ENCODE measurements at regions of chr3 and their contacts with region 1.

Region 1: DNA sequence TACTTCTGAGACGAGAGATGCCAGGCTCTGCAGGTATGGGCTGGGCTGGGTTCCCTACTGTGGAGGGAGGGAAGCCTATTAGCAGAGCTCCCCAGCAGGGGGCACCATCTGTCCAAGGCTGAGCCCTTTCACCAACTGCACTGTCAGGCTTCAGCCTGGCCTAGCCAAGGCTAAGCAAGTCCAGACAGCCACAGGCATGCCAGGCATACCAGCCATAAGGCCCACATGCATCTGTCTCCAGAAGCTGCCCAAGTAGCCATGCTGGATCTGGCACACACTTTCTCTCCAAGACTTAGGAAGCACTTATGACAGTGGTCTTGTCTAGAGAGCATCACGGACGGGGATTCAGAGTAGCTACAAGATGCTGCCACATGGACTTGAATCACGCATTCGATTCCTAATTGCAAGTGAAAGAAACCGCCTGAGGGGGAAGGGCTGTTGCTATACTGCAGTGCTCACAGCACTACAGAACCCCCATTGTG is 28.3 kb downstream of the RUVBL1 start:
- DNase-seq: peak; percentile 86
- ATAC-seq: peak; percentile 99
- H3K4me3 Mint-ChIP-seq: no peak overlapping the region
- H3K27ac Mint-ChIP-seq: peak overlapping the region; percentile 5
- H3K4me1 Mint-ChIP-seq: peaks cover 11% of the 10 kb centered on the region
- H3K27me3 Mint-ChIP-seq: no peaks in the 10 kb centered on the region
- CTCF ChIP-seq: peak; percentile 70

Region 2: GRCh38 chr3:128080320-128081080 is 14.8 kb before region 1 on chr3:
- CTCF ChIA-PET with region 1: interaction called, 17 read pairs
- POLR2A ChIA-PET with region 1: interaction called, 3 read pairs
- intact Hi-C with region 1: no loop called
- DNase-seq: no peak
- ATAC-seq: no peak
- H3K4me3 Mint-ChIP-seq: no peak overlapping the region
- H3K27ac Mint-ChIP-seq: no peak overlapping the region
- H3K4me1 Mint-ChIP-seq: peaks cover 10% of the 10 kb centered on the region
- H3K27me3 Mint-ChIP-seq: no peaks in the 10 kb centered on the region
- CTCF ChIP-seq: no peak

Region 3: DNA sequence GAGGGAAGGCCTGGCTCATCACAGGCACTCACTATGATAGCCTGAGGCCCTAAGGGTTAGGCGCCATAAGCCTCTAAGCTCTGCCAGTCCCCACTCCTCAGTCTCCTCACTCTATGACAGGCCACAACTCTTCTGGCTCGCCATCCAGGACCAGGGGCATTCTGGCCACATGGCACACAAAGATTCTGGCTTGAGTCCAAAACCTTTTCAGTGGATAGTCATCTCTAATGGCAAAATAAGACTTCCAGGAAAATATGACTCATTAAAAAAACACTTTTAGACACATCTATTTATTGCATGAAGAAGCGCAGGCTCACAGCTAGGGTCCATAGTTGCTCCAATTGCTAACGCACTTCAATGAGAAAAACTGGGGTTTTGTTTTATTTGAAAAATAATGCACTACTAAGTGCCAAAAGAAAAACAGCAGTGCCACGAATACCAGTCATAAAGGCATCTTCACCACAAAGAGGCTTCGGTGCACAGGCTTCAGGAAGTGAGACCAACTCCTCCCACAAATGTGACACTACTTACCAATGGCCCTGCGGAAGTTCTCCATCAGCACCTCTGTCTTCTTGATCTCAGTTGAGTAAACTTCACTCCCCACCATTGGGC is 17.2 kb after region 1 on chr3:
- CTCF ChIA-PET with region 1: interaction called, 21 read pairs
- POLR2A ChIA-PET with region 1: no interaction called
- intact Hi-C with region 1: no loop called
- DNase-seq: peak; percentile 70
- ATAC-seq: peak; percentile 97
- H3K4me3 Mint-ChIP-seq: peak overlapping the region; percentile 18
- H3K27ac Mint-ChIP-seq: peak overlapping the region; percentile 97
- H3K4me1 Mint-ChIP-seq: peaks cover 44% of the 10 kb centered on the region
- H3K27me3 Mint-ChIP-seq: no peaks in the 10 kb centered on the region
- CTCF ChIP-seq: no peak

Region 4: DNA sequence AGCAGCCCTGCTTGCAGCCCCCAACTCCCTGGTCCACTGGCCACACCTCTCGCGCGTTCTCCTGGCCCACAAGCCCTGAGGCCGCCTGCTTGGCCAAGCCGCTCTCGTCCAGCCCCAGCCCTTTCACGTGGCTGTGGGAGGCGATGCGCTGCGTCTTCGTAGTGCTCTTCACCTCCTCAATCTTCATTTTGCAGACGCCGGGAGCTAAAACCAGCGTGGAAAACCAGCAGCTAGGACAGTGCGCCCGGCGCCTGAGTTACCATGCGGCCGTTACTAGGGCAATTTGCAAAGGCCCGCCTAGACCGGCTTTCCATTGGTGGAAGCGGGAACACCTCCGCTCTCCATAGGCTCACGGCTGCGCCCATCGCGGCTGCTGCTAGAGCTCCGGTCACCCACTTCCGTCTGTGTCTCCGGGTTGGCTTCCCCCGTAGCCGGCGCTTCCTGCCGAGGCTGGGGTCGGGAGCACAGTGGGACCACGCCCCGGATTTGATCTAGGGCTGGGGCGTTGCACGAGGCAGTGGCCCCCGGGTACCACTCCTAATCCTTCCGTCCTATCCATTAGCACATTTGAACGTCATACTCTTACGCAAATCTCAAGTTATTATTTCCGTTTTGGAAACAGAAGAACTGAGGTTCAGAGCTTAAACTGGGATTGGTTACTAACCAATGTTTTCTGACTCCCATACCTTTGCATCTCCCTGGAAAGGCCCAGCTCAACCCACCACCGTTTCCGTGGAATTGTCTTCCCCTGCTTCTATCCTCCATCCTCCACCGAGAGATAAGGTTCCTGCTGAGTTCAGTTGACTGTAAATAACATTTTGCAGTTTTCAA is 28.5 kb after region 1 on chr3 and contains the start of gene RUVBL1:
- CTCF ChIA-PET with region 1: interaction called, 23 read pairs
- POLR2A ChIA-PET with region 1: no interaction called
- intact Hi-C with region 1: no loop called
- DNase-seq: peak; percentile 99
- ATAC-seq: peak; percentile 99
- H3K4me3 Mint-ChIP-seq: peak within 1 kb of the TSS; percentile 99
- H3K27ac Mint-ChIP-seq: peak within 1 kb of the TSS; percentile 94
- H3K4me1 Mint-ChIP-seq: peaks cover 22% of the 10 kb centered on the region
- H3K27me3 Mint-ChIP-seq: no peaks in the 10 kb centered on the region
- CTCF ChIP-seq: no peak
- total RNA-seq, gene RUVBL1: 99.0 to 99.5 TPM

Region 5: GRCh38 chr3:128133273-128134084 is 38.2 kb after region 1 on chr3:
- CTCF ChIA-PET with region 1: interaction called, 56 read pairs
- POLR2A ChIA-PET with region 1: no interaction called
- intact Hi-C with region 1: no loop called
- DNase-seq: peak; percentile 60
- ATAC-seq: peak; percentile 55
- H3K4me3 Mint-ChIP-seq: no peak overlapping the region
- H3K27ac Mint-ChIP-seq: no peak overlapping the region
- H3K4me1 Mint-ChIP-seq: no peaks in the 10 kb centered on the region
- H3K27me3 Mint-ChIP-seq: no peaks in the 10 kb centered on the region
- CTCF ChIP-seq: peak; percentile 68

Region 6: DNA sequence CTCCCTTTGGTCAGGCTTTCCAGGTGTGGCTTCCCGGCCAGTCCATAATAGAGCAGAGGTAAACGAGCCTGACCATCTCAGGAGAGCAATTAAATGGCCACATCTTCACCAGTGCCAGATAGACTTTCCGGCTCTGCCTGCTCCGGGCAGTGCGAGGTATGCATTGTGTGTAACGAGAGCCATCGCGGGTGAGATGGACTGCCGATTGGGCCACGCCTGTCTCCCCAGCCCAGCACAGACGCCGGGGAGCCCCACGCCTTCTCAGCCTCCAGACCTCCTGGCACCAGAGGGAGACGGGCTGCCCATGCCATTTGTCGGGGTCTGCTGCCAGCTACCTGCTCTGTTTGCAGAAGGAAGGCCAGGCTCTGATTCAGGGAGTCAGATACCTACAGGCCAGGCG is 309.0 kb after region 1 on chr3:
- CTCF ChIA-PET with region 1: no interaction called
- POLR2A ChIA-PET with region 1: no interaction called
- intact Hi-C with region 1: no loop called
- DNase-seq: no peak
- ATAC-seq: no peak
- H3K4me3 Mint-ChIP-seq: no peak overlapping the region
- H3K27ac Mint-ChIP-seq: no peak overlapping the region
- H3K4me1 Mint-ChIP-seq: no peaks in the 10 kb centered on the region
- H3K27me3 Mint-ChIP-seq: no peaks in the 10 kb centered on the region
- CTCF ChIP-seq: no peak

Measured in activated CD8-positive, alpha-beta T cell treated with anti-CD3 and anti-CD28 coated beads for 36 hours (primary cell).